Caco-2 (cell line): ENCODE measurements at regions of chr2 and their contacts with region 1.

Region 1: DNA sequence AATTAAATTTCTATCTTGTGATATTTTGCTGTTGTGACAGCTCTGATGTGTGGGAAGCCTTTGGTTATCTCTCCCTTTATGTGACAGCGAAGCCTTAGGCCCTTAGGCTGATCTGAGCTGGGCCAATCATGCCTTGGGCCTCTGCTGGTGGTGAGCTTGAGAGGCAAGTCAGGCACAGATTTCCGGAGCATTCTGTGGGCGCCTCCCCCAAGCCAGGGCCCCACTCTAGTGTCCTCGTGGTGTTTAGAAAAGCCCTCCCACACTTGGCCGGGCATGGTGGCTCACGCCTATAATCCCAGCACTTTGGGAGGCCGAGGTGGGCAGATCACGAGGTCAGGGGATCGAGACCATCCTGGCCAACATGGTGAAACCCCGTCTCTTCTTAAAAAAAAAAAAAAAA is 239.8 kb downstream of the SH3RF3 start:
- DNase-seq: peak in 1 of 2 experiments; percentile 15
- H3K4me3 ChIP-seq: no peak overlapping the region
- H3K4me3 Mint-ChIP-seq: no peak overlapping the region
- H3K27ac Mint-ChIP-seq: no peak overlapping the region
- H3K4me1 ChIP-seq: no peaks in the 10 kb centered on the region
- H3K4me1 Mint-ChIP-seq: peaks cover 7% of the 10 kb centered on the region
- H3K27me3 ChIP-seq: no peaks in the 10 kb centered on the region
- H3K27me3 Mint-ChIP-seq: peaks cover 8% of the 10 kb centered on the region
- CTCF ChIP-seq: no peak

Region 2: GRCh38 chr2:108916796-108917421 is 451.9 kb before region 1 on chr2:
- CTCF ChIA-PET with region 1: no interaction called
- POLR2A ChIA-PET with region 1: no interaction called
- intact Hi-C with region 1: no loop called
- DNase-seq: no peak
- H3K4me3 ChIP-seq: no peak overlapping the region
- H3K4me3 Mint-ChIP-seq: no peak overlapping the region
- H3K27ac Mint-ChIP-seq: no peak overlapping the region
- H3K4me1 ChIP-seq: no peaks in the 10 kb centered on the region
- H3K4me1 Mint-ChIP-seq: no peaks in the 10 kb centered on the region
- H3K27me3 ChIP-seq: no peaks in the 10 kb centered on the region
- H3K27me3 Mint-ChIP-seq: no peaks in the 10 kb centered on the region
- CTCF ChIP-seq: no peak

Region 3: GRCh38 chr2:109386004-109386695 is 17.4 kb after region 1 on chr2:
- CTCF ChIA-PET with region 1: no interaction called
- POLR2A ChIA-PET with region 1: no interaction called
- intact Hi-C with region 1: loop called (anchors 1 kb)
- DNase-seq: no peak
- H3K4me3 ChIP-seq: no peak overlapping the region
- H3K4me3 Mint-ChIP-seq: no peak overlapping the region
- H3K27ac Mint-ChIP-seq: no peak overlapping the region
- H3K4me1 ChIP-seq: no peaks in the 10 kb centered on the region
- H3K4me1 Mint-ChIP-seq: no peaks in the 10 kb centered on the region
- H3K27me3 ChIP-seq: no peaks in the 10 kb centered on the region
- H3K27me3 Mint-ChIP-seq: peaks cover 3% of the 10 kb centered on the region
- CTCF ChIP-seq: no peak